Cardiac septum (tissue), 1 donor: ENCODE measurements at regions of chr4 and their contacts with region 1.

Region 1: GRCh38 chr4:145719752-145720624 is 40.0 kb downstream of the C4orf51 start:
- DNase-seq: no peak

Region 2: GRCh38 chr4:145388043-145388442 is 331.9 kb before region 1 on chr4:
- intact Hi-C with region 1: no loop called
- DNase-seq: no peak

Region 3: GRCh38 chr4:145635630-145636029 is 84.4 kb before region 1 on chr4:
- intact Hi-C with region 1: loop called (anchors 5 kb)
- DNase-seq: no peak